PC-3 (cell line): ENCODE measurements at regions of chr18 and their contacts with region 1.

Region 1: GRCh38 chr18:57887543-57888383 is 84.6 kb upstream of the ATP8B1 start:
- DNase-seq: no peak
- ATAC-seq: no peak
- H3K4me3 ChIP-seq: no peak overlapping the region
- H3K27ac ChIP-seq: no peak overlapping the region
- H3K4me1 ChIP-seq: peaks cover 7% of the 10 kb centered on the region
- H3K27me3 ChIP-seq: no peaks in the 10 kb centered on the region
- CTCF ChIP-seq: no peak

Region 2: DNA sequence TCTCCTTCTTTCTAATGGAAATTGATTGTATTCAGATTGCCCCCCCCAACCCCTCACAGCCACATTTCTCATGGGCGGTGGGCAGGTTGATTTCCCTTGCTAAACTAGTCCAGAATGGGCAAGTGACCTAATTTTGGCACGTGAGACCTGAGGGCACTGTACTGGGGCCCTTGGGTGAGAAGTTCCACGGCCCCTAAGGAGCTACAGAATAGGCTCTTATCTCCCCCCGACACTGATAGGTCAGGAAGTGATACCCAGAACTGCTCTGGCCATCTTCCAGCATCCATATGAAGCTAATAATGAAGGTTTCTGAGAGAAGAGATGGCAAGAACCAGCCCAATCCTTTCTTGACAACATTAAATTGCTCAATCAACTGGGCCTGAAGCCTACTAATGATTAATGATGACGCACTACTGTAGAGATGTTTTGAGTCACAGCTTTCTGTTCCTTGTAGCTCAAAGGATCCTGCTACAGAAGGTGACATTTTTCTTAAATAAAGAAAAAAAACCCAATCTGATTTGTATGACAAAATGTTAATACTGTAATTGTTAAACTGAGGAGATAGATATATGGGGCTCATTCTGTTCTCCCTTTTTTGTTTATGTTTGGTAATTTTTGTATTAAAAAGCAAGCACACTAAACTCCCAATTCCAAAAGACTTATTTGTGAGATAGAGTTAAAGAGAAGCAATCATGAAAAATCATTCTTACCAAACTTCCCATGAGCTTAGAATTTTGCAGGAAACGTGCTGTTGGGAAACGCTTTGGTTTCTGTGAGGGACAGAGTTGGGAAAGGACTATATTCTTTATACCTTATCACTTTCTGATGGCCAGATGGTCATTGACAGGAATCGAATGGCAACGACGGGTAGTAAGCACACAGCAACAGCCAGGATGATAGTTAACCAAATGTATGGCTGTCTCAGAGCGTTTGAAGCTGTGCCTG is 237.9 kb before region 1 on chr18:
- CTCF ChIA-PET with region 1: no interaction called
- POLR2A ChIA-PET with region 1: interaction called, 19 read pairs
- intact Hi-C with region 1: no loop called
- DNase-seq: peak; percentile 95
- ATAC-seq: peak; percentile 94
- H3K4me3 ChIP-seq: no peak overlapping the region
- H3K27ac ChIP-seq: peak overlapping the region; percentile 76
- H3K4me1 ChIP-seq: peaks cover 13% of the 10 kb centered on the region
- H3K27me3 ChIP-seq: no peaks in the 10 kb centered on the region
- CTCF ChIP-seq: no peak

Region 3: GRCh38 chr18:57931038-57931437 is 43.3 kb after region 1 on chr18:
- CTCF ChIA-PET with region 1: no interaction called
- POLR2A ChIA-PET with region 1: no interaction called
- intact Hi-C with region 1: no loop called
- DNase-seq: no peak
- ATAC-seq: no peak
- H3K4me3 ChIP-seq: no peak overlapping the region
- H3K27ac ChIP-seq: no peak overlapping the region
- H3K4me1 ChIP-seq: peaks cover 3% of the 10 kb centered on the region
- H3K27me3 ChIP-seq: no peaks in the 10 kb centered on the region
- CTCF ChIP-seq: no peak